H1 (cell line): ENCODE measurements at regions of chr1 and their contacts with region 1.

Region 1: DNA sequence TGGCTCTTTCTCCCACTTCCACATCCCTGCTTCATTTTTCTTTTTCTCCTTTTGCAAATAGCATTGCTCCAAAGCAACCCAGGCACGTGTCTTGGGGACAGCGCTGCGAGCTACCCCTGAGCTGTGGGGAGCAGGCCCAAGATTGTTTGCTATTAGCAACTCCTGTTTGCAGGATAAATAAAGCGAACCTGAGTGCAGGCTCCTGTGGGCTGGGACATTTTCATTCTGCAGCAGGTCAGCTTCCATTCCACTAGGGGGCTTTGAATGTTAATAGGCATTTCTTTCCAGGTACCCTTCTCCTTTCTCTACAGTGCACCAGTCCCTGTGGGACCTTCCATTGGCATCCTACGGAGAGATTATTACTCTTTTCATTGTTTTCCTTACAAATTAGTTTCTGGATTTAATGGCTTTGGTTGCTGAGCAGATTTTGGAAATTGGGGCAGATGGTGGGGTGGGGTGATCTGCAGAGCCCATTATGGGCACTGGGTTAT is 54.0 kb downstream of the OLFML3 start:
- DNase-seq: peak in 1 of 2 experiments; percentile 63
- H3K4me3 ChIP-seq: peak overlapping the region; percentile 37 to 59 (median 51)
- H3K27ac ChIP-seq: peak overlapping the region; percentile 66
- H3K4me1 ChIP-seq: peaks cover 3 to 36% (median 25%) of the 10 kb centered on the region in 4 experiments
- H3K27me3 ChIP-seq: no peaks in the 10 kb centered on the region
- CTCF ChIP-seq: peak; percentile 33 to 82 (median 69)
- EP300 ChIP-seq: 0 out of 3 replicates have a peak, but pooled peaks of 1 of the 2 experiments have one; percentile 16
- POLR2A ChIP-seq: no peak; a peak in 1 of 3 replicates
- RAD21 ChIP-seq: peak; percentile 63 to 66

Region 2: DNA sequence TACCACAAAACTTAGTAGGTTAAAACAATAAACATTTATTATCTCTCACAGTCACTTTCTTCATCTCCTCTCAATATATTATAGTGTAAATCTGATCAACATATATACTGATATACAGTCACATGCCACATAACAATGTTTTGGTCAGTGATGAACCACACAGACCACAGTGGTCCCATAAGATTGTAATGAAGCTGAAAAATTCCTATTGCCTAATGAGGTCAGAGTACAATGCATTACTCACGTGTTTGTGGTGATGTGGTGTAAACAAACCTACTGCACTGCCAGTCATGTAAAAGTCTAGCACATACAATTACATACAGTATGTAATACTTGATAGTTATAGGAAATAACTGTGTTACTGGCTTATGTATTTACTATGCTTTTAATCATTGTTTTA is 23.9 kb before region 1 on chr1:
- CTCF ChIA-PET with region 1: interaction called, 4 read pairs
- POLR2A ChIA-PET with region 1: interaction called, 14 read pairs
- DNase-seq: no peak
- H3K4me3 ChIP-seq: no peak overlapping the region
- H3K27ac ChIP-seq: no peak overlapping the region
- H3K4me1 ChIP-seq: peaks cover 0 to 18% (median 7%) of the 10 kb centered on the region in 4 experiments; a peak in 4 of 7 replicates
- H3K27me3 ChIP-seq: no peaks in the 10 kb centered on the region
- CTCF ChIP-seq: no peak
- EP300 ChIP-seq: no peak
- POLR2A ChIP-seq: no peak
- RAD21 ChIP-seq: no peak

Region 3: DNA sequence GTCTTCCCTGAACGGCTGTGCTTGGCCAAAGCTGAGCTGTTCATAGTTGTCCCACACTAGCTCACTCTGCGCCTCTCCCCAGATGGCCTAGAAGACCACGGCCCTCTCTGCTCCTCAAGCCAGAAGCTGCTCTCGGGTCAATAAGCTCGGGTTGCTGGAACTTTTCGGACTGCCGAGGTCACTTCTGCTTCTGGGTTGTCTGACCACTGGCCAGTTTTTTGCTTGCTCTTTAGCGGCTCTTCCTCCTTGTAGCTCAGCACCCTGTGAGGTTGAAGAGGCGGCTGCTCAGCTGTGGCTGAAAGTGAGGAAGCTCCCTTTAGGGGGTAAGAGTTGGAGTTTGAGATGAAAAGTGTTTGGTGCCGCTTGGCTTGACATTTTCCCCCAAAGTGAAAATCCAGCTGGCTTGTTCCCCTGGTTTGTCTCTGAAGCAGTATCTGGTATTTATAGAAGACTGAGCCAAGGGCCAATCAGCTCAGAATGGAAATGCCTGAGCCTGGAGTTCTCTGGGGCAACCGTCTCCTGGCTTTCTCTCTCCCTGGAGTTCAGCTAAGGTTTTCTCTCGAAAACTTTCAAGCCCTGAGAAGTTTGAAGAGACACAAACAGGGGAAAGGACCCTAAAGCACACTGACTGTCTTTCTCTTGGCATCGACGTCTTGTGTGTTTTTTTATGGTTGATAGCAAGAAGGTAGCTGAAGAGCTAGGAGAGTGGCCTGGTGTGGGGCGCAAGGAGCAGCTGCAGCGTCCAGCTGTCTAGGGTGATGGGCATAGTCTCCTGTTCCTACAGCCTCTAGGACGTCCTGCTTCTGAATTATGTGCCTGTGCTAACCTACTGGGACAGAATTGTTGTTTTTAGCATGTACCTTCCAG is 48.4 kb after region 1 on chr1:
- CTCF ChIA-PET with region 1: interaction called, 7 read pairs
- POLR2A ChIA-PET with region 1: interaction called, 47 read pairs
- DNase-seq: no peak
- H3K4me3 ChIP-seq: no peak overlapping the region
- H3K27ac ChIP-seq: no peak overlapping the region
- H3K4me1 ChIP-seq: peaks cover 10 to 31% (median 24%) of the 10 kb centered on the region in 4 experiments
- H3K27me3 ChIP-seq: no peaks in the 10 kb centered on the region; a peak in 1 of 7 replicates
- CTCF ChIP-seq: no peak
- EP300 ChIP-seq: no peak
- POLR2A ChIP-seq: no peak
- RAD21 ChIP-seq: no peak

Region 4: GRCh38 chr1:114122941-114123618 is 89.8 kb after region 1 on chr1:
- CTCF ChIA-PET with region 1: interaction called, 4 read pairs
- POLR2A ChIA-PET with region 1: interaction called, 10 read pairs
- DNase-seq: no peak
- H3K4me3 ChIP-seq: no peak overlapping the region
- H3K27ac ChIP-seq: no peak overlapping the region
- H3K4me1 ChIP-seq: peaks cover 2 to 17% (median 9%) of the 10 kb centered on the region in 4 experiments
- H3K27me3 ChIP-seq: no peaks in the 10 kb centered on the region
- CTCF ChIP-seq: no peak; a peak in 1 of 4 replicates
- EP300 ChIP-seq: no peak
- POLR2A ChIP-seq: no peak
- RAD21 ChIP-seq: peak; percentile 9 to 23; a peak in 1 of 4 replicates